Vagina (tissue), 2 donors: ENCODE measurements at regions of chr10 and their contacts with region 1.

Region 1: DNA sequence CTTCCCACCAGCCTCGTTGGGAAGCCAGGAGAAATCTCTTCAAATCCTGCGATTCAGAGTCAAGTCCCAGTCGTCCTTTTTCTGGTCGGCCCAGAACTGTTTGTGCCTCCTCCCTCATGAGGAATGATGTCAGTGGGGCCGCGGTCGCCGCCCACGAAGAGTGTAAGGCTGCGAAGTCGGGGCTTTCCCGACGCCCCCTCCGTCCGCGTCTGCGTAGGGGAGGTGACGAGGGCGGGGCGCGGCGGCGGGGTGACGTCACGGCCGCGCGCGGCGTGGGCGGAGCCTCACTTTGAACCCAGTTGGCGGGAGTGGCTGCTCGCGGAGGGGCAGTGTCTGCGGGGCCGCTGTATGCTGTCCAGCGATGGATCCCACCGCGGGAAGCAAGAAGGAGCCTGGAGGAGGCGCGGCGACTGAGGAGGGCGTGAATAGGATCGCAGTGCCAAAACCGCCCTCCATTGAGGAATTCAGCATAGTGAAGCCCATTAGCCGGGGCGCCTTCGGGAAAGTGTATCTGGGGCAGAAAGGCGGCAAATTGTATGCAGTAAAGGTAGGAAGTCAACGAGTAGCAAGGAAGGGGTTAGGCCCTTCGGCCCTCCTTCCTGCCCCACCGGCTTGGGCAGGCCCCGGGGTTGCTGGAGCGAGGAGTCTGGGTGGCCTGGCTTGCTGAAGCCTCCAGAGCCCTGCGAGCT is at the start of gene MASTL:
- DNase-seq: peak; percentile 95 to 97
- H3K4me3 ChIP-seq: peak within 1 kb of the TSS; percentile 55 to 84
- H3K27ac ChIP-seq: peak within 1 kb of the TSS; percentile 100
- H3K4me1 ChIP-seq: peaks cover 45% of the 10 kb centered on the region
- H3K27me3 ChIP-seq: no peaks in the 10 kb centered on the region
- CTCF ChIP-seq: no peak
- POLR2A ChIP-seq: peak in 1 of 2 donors; percentile 75
- total RNA-seq, gene MASTL: 8.3 TPM

Region 2: DNA sequence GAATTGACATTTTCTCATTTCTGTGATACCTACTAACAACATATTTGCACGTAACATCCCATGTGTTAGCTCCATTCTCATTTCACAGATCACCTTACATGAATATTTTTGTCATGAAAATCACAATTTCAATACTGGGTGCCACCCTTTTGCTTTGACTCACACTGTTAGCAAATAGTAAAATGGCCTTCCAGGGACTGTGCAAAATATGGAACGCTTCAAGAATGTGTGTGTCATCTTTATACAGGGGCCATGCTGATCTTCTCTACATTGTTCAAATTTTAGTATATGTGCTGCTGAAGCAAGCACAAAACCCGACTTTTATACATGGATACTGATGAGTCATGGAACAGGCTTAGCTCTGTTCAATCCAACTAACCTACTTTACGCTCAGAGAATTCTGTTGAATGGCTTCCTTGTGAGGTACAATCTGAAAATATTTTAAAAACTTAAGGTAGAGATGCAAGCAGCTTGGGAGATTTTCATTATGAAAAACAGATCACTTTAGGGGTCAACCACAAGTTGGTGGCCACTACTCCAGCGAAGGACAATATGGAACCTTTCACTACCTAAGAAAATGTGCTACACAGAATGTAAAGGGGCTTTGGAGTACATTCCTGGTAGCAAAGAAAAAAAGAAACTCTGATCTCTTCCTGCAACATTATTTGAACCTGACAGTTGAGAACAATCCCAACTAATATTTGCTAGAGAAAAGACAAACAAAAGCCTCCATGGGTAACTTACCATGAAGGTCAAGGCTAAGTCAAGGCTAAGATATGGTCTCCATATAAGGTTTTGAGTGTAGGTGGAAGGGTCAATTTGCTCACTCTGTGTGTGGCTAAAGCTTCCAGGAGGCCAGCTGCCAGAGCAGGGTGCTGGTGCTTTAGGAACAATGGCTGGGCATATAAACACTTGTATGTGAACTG is 66.8 kb before region 1 on chr10:
- intact Hi-C with region 1: no loop called
- DNase-seq: no peak
- H3K4me3 ChIP-seq: no peak overlapping the region
- H3K27ac ChIP-seq: no peak overlapping the region
- H3K4me1 ChIP-seq: no peaks in the 10 kb centered on the region
- H3K27me3 ChIP-seq: no peaks in the 10 kb centered on the region
- CTCF ChIP-seq: no peak
- POLR2A ChIP-seq: no peak

Region 3: DNA sequence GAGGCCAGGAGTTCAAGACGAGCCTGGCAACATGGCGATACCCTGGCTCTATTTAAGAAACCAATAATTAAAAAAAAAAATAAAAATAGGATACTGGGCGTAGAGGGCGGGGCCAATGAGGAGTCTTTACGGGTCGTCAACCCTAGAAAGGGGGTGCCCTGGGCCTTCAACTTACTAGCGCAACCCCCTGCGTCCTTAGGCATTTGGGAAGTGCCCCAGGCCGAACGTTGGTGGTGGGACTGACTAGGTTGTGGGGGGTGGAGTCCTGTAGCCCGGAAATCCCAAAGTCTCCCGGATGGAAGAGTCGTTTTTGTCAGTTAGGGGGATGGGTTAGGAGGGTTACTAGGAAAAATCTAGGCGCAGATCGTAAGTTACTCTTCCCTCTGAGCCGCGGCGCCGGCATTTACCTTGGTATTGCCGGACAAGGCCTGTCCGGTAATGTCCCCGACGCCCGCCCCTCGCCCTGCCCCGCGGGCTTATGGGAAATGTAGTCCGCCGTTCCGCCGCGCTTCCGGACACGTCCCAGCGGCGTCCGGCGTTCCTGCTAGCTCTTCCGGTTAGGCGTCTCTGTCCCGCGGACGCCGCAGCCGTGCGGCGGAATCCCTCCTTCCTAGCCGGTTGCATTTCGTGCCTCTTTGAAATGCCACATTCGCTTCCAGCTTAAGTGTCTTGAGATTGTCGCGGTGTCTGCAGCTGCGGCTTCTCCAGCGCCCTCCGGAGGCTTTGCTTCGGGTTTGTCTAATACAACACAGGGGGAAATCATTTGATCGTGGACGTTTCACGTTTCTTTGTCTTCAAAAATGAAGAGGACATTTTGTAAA is 86.7 kb after region 1 on chr10:
- intact Hi-C with region 1: loop called (anchors 5 kb)
- DNase-seq: peak in 1 of 2 donors; percentile 95
- H3K4me3 ChIP-seq: peak overlapping the region; percentile 81 to 85
- H3K27ac ChIP-seq: peak overlapping the region; percentile 98
- H3K4me1 ChIP-seq: peaks cover 44% of the 10 kb centered on the region
- H3K27me3 ChIP-seq: no peaks in the 10 kb centered on the region
- CTCF ChIP-seq: peak in 1 of 3 experiments; percentile 58
- POLR2A ChIP-seq: peak; percentile 45 to 86

Region 4: GRCh38 chr10:27601503-27601902 is 446.3 kb after region 1 on chr10:
- intact Hi-C with region 1: no loop called
- DNase-seq: no peak
- H3K4me3 ChIP-seq: no peak overlapping the region
- H3K27ac ChIP-seq: no peak overlapping the region
- H3K4me1 ChIP-seq: no peaks in the 10 kb centered on the region
- H3K27me3 ChIP-seq: no peaks in the 10 kb centered on the region
- CTCF ChIP-seq: no peak
- POLR2A ChIP-seq: no peak

Region 5: GRCh38 chr10:28532383-28533175 is 1377.4 kb after region 1 on chr10 and contains the start of gene WAC:
- intact Hi-C with region 1: loop called (anchors 5 kb)
- DNase-seq: peak in 1 of 2 donors; percentile 95
- H3K4me3 ChIP-seq: peak within 1 kb of the TSS; percentile 57 to 99
- H3K27ac ChIP-seq: peak within 1 kb of the TSS; percentile 88
- H3K4me1 ChIP-seq: peaks cover 59% of the 10 kb centered on the region
- H3K27me3 ChIP-seq: no peaks in the 10 kb centered on the region
- CTCF ChIP-seq: no peak
- POLR2A ChIP-seq: peak in 1 of 2 donors; percentile 76
- total RNA-seq, gene WAC: 112 TPM